MCF 10A (cell line): ENCODE measurements at regions of chr20 and their contacts with region 1.

Region 1: GRCh38 chr20:47317127-47317895 is 39.2 kb downstream of the ZMYND8 start:
- DNase-seq: peak; percentile 100
- H3K4me3 Mint-ChIP-seq: peak overlapping the region; percentile 65
- H3K27ac Mint-ChIP-seq: peak overlapping the region; percentile 94
- H3K4me1 Mint-ChIP-seq: peaks cover 65% of the 10 kb centered on the region
- H3K27me3 Mint-ChIP-seq: no peaks in the 10 kb centered on the region
- CTCF ChIP-seq: no peak

Region 2: DNA sequence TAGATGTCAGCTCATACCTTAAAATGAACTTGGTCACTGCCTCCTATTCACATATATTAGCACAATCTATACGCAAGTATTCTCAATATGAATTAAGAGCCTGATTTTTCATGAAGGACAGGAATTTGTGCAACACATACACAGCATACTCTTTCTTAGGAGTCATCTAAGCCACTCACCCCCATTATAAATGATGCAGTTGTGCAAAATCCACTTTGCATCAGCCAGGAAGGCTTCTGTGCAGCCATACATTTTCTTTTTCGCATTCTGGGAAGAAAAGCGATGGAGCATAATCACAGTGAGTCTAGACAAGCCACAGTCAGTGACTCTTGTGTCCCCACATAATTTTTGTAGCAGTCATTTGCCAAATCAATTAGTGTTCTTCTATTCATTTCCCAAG is 27.3 kb before region 1 on chr20:
- CTCF ChIA-PET with region 1: interaction called, 4 read pairs
- POLR2A ChIA-PET with region 1: interaction called, 11 read pairs
- intact Hi-C with region 1: no loop called
- DNase-seq: no peak
- H3K4me3 Mint-ChIP-seq: no peak overlapping the region
- H3K27ac Mint-ChIP-seq: no peak overlapping the region
- H3K4me1 Mint-ChIP-seq: no peaks in the 10 kb centered on the region
- H3K27me3 Mint-ChIP-seq: no peaks in the 10 kb centered on the region
- CTCF ChIP-seq: no peak

Region 3: DNA sequence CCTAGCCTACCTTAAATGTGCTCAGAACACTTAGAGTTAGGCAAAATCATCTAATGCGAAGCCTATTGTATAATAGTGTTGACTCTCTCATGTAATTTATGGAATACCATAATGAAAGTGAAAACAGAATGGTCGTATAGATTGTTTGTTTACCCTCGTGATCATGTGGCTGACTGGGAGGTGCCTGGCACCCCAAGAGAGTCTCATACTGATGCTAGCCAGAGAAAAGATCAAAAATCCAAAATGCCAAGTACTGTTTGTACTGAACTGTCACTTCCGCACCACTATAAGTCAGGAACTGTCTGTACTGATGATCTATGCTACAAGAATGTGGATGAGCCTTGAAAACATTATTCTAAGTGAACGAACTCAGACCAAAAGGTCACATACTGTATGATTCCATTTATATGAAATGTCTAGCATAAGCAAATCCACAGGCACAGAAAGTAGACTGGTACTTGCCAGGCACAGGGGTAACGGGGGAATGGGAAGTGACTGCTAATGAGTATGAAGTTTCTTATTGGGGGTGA is 16.8 kb after region 1 on chr20:
- CTCF ChIA-PET with region 1: interaction called, 12 read pairs
- POLR2A ChIA-PET with region 1: interaction called, 463 read pairs
- intact Hi-C with region 1: loop called (anchors 1 kb)
- DNase-seq: peak; percentile 96
- H3K4me3 Mint-ChIP-seq: peak overlapping the region; percentile 72
- H3K27ac Mint-ChIP-seq: peak overlapping the region; percentile 96
- H3K4me1 Mint-ChIP-seq: peaks cover 67% of the 10 kb centered on the region
- H3K27me3 Mint-ChIP-seq: no peaks in the 10 kb centered on the region
- CTCF ChIP-seq: no peak

Region 4: DNA sequence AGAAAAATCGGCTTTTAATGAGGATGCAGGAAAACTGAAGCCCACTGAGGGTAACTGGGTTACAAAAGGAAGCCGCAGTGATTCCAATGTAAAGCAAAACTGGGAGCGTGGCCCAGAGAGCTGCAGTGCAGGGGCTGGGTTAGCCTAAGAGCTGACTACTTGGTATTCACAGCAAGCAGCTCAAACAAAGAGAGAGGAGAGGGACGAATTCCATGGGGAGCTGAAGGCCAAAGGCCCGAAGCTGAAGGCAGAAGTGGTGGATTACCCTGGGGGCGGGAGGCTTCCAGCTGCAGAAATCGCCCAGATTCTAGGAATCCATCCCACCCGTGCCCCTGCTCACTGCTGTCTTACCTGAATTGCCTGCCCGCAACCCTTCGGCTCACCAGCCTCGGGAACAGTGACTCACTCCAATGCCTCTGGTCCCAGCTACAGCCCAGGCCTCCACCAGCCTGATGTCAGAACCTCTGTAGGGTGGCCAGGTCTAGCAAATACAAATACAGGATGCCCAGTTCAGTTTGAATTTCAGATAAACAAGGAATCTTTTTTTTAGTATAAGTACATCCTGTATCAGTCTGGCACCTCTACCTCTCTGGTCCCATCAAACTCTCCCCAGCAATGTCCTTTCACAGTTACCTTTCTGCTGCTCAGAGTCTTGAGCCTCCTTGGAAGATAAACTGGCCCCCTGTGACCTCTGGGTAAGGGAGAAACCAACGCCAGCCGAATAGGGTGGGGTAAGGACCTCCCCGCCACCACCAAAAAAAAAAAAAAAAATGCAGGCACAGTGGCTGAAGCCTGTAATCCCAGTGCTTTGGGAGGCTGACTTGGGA is 53.8 kb after region 1 on chr20:
- CTCF ChIA-PET with region 1: interaction called, 4 read pairs
- POLR2A ChIA-PET with region 1: interaction called, 10 read pairs
- intact Hi-C with region 1: no loop called
- DNase-seq: peak; percentile 62
- H3K4me3 Mint-ChIP-seq: no peak overlapping the region
- H3K27ac Mint-ChIP-seq: no peak overlapping the region
- H3K4me1 Mint-ChIP-seq: peaks cover 9% of the 10 kb centered on the region
- H3K27me3 Mint-ChIP-seq: no peaks in the 10 kb centered on the region
- CTCF ChIP-seq: no peak

Region 5: DNA sequence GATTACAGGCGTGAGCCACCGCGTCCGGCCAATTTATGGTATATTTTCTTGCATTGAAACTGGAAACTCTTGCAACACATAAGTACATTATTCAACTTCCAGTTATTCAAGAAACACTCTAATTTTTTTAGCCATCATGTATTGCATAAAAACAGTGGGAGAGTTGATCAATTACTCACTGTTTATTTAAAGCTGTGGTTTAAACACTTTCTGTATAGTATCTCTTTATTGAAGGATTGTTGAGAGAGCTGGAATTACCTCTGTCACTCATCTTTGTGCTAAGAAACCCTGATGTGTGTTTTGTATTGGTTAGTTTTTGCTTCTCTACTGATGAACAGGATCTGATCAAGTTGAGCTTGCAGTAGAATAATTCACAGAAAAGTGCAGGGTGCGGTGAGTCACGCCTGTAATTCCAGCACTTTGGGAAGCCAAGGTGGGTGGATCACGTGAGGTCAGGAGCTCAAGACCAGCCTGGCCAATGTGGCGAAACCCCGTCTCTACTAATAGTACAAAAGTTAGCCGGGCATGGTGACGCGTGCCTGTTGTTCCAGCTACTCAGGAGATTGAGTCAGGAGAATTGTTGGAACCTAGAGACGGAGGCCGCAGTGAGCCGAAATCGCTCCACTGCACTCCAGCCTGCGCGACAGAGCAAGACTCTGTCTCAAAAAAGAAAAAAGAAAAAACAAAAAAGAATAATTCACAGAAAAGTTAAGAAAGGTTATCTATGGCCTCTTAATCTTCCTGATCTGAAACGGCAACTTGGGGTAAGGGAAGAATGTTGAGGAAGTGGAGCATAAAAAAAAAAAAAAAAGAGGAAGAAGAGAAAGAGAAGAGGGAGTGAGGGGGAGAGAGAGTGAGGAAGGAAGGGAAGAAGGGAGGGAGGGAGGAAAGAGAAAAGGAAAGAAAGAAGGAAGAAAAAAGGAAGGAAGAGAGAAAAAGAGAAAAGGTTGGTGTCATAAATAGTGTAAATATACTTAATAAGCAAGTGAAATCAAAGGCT is 115.2 kb after region 1 on chr20:
- CTCF ChIA-PET with region 1: no interaction called
- POLR2A ChIA-PET with region 1: interaction called, 18 read pairs
- intact Hi-C with region 1: no loop called
- DNase-seq: peak; percentile 94
- H3K4me3 Mint-ChIP-seq: peak overlapping the region; percentile 66
- H3K27ac Mint-ChIP-seq: peak overlapping the region; percentile 99
- H3K4me1 Mint-ChIP-seq: peaks cover 27% of the 10 kb centered on the region
- H3K27me3 Mint-ChIP-seq: no peaks in the 10 kb centered on the region
- CTCF ChIP-seq: no peak